ENCODE measurements at regions of chr1 and their contacts with region 1.

Region 1: GRCh38 chr1:10032590-10033358 is at the start of gene UBE4B:
- DNase-seq: peak; percentile 95 to 99
- H3K4me3 ChIP-seq: peak within 1 kb of the TSS; percentile 77 to 82
- H3K27ac ChIP-seq: peak within 1 kb of the TSS; percentile 86 to 92
- H3K4me1 ChIP-seq: peaks cover 3 to 13% of the 10 kb centered on the region in 2 donors
- H3K27me3 ChIP-seq: no peaks in the 10 kb centered on the region
- CTCF ChIP-seq: peak; percentile 69 to 90 (median 75)
- total RNA-seq, gene UBE4B: 35.2 TPM

Region 2: DNA sequence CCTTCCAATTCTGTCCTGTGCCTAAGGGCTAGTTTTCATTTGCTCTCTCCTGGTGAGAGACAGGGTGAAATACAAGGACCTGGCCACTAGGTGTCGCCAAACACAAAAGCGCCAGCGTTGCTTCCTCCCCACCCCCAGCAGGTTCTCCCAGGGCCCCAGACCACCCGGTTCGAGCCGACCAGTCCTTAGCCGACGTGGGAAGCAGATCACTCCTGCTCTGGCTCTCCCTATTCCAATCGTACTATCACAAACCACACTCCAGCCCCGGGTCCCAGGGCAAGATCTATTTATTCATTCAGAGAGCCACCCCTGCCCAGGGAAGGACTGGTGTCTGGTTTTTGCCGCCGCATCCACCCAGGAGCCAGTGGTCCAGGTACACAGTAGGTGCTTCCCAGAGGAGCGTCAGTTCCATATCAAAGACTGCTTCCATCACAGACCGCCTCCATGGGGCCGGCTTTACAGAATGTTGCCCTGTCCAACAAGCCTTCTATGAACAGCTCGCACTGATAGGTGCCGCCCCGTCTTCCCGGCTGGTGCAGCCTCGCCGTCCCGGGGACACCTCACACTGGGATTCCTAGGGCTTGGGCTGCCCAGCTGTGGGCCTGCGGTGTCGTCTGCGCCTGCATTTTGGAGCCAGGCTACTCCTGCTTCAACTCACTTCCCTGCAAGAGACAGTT is 157.7 kb before region 1 on chr1:
- intact Hi-C with region 1: loop called (anchors 5 kb)
- DNase-seq: peak; percentile 15 to 79
- H3K4me3 ChIP-seq: peak overlapping the region in 1 of 2 donors; percentile 59
- H3K27ac ChIP-seq: peak overlapping the region; percentile 17 to 67
- H3K4me1 ChIP-seq: peaks cover 5 to 14% of the 10 kb centered on the region in 2 donors
- H3K27me3 ChIP-seq: no peaks in the 10 kb centered on the region
- CTCF ChIP-seq: peak; percentile 85 to 97 (median 96)

Region 3: DNA sequence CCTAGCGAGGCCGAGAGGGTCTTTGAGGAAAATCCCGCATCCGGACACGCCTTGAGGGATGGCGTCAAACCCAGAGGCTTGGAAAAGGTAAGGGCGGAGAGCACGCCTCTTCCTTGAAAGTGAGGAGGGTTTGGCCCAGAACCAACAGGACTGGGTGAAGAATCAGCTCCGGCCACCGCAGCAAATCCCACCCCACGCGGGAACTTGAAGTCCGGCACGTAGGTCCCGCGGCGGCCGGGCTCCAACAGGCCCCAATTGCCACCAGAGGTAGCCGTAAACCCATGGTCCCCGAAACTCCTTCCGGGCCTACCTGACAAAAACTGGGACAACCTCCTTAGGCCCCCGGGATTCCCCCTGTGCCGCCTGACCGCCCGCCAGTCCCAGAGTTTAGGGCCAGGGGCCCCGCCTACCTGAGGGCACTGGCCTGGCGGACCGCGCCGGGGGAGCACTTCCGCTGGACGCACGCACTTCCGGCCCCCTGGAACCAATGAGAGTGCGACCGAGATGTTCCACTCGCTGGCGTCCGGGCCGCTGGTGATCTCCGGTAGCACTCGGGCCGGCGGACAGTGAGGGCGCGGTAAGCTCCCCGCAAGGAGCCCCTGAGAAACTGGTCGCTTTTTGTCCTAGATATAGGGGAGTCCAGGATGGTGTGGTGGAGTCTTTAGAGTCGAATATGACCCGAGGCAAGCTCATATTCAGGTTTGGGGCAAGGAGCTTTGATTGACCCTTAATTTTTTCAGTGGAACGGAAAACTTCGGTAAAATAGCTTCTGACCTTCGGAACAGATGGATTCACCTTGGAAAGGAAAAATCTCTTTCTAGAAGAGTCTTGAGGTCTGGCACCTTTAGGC is 89.6 kb before region 1 on chr1 and contains the starts of genes LZIC and NMNAT1:
- intact Hi-C with region 1: loop called (anchors 1 kb)
- DNase-seq: peak; percentile 55 to 96
- H3K4me3 ChIP-seq: peak within 1 kb of the TSS; percentile 88 to 95
- H3K27ac ChIP-seq: peak within 1 kb of the TSS; percentile 84 to 85
- H3K4me1 ChIP-seq: peaks cover 0 to 17% of the 10 kb centered on the region in 2 donors
- H3K27me3 ChIP-seq: no peaks in the 10 kb centered on the region
- CTCF ChIP-seq: peak in 1 of 3 experiments; percentile 12
- total RNA-seq, gene LZIC: 3.7 TPM
- total RNA-seq, gene NMNAT1: 7.9 TPM

Region 4: DNA sequence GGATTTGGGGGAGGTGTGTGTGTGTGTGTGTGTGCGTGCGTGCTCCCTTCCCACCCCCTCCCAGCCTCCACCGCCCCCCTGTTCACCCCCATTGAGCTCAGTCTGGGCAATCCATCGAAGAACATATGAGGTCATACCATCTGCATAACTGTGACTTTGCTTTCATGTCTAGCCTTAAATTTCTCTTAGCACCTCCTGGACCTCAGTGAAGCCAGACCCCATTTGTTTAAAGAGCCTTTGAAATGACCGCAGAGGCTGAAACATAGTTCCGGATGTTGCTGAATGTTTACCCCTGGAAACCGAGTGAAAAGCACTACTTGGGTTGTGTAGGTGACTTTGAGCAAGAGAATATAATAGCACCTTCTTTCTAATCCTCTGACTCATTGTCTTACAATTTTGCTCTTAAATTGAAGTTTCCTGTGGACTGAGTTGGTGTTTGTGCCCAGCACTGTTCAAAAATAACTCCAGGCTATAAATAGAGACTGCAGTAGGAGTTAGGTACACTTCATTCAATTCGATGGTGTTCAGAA is 75.4 kb after region 1 on chr1:
- intact Hi-C with region 1: loop called (anchors 1 kb)
- DNase-seq: peak in 1 of 2 donors; percentile 77
- H3K4me3 ChIP-seq: peak overlapping the region in 1 of 2 donors; percentile 40
- H3K27ac ChIP-seq: peak overlapping the region; percentile 83 to 94
- H3K4me1 ChIP-seq: peaks cover 5 to 31% of the 10 kb centered on the region in 2 donors
- H3K27me3 ChIP-seq: no peaks in the 10 kb centered on the region
- CTCF ChIP-seq: no peak

Region 5: DNA sequence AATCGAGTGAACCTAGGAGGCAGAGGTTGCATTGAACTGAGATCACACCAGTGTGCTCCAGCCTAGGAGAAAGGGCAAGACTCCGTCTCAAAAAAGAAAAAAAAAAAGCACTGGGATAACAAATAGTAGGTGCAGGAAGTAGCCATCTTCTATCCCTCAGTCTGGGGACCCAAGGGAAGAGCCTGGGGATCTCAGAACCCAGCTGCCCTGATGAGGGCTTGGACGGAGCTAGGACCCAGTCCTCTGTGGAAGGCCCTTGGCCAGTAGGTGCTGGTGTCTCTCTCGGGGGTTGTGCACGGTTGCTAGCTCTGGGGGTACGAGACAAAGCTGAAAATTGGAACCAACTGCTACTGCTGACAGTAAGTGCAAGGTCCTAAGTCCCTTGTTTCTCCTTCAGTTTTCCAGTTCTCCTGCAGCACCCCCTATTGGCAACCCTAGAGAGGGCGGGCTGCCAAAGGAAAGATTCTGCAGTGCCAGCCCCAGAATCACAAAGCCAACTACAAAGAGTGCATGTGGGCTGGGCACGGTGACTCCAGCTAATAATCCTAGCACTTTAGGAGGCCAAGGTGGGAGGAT is 120.0 kb after region 1 on chr1:
- intact Hi-C with region 1: loop called (anchors 2 kb)
- DNase-seq: peak in 1 of 2 donors; percentile 84
- H3K4me3 ChIP-seq: no peak overlapping the region
- H3K27ac ChIP-seq: peak overlapping the region; percentile 4 to 86
- H3K4me1 ChIP-seq: peaks cover 2 to 14% of the 10 kb centered on the region in 2 donors
- H3K27me3 ChIP-seq: no peaks in the 10 kb centered on the region
- CTCF ChIP-seq: peak; percentile 72 to 73 (median 73)

Measured in ascending aorta (tissue), 2 donors.